Activated T-helper 2 cell treated with anti-CD3 and anti-CD28 coated beads, Interferon-gamma antibody, Interleukin-2, Interleukin-4, amounts not matched to agents 10 μg/mL and 5 μg/mL and 100 μg/mL, durations not matched to agents 14 hours and 24 hours and 36 hours (primary cell): ENCODE measurements at regions of chr4 and their contacts with region 1.

Region 1: GRCh38 chr4:177332119-177332518 is 22.4 kb downstream of the NEIL3 start:
- DNase-seq: no peak
- H3K4me3 Mint-ChIP-seq: no peak overlapping the region
- H3K27ac Mint-ChIP-seq: peak overlapping the region; percentile 64
- H3K4me1 Mint-ChIP-seq: peaks cover 64% of the 10 kb centered on the region
- H3K27me3 Mint-ChIP-seq: no peaks in the 10 kb centered on the region

Region 2: GRCh38 chr4:177315767-177316464 is 16.2 kb before region 1 on chr4:
- intact Hi-C with region 1: loop called (anchors 1 kb)
- DNase-seq: no peak
- H3K4me3 Mint-ChIP-seq: peak overlapping the region; percentile 67
- H3K27ac Mint-ChIP-seq: peak overlapping the region; percentile 62
- H3K4me1 Mint-ChIP-seq: peaks cover 87% of the 10 kb centered on the region
- H3K27me3 Mint-ChIP-seq: no peaks in the 10 kb centered on the region

Region 3: GRCh38 chr4:177573505-177573904 is 241.4 kb after region 1 on chr4:
- intact Hi-C with region 1: no loop called
- DNase-seq: no peak
- H3K4me3 Mint-ChIP-seq: no peak overlapping the region
- H3K27ac Mint-ChIP-seq: no peak overlapping the region
- H3K4me1 Mint-ChIP-seq: no peaks in the 10 kb centered on the region
- H3K27me3 Mint-ChIP-seq: peaks cover 4% of the 10 kb centered on the region